ENCODE measurements at regions of chr2 and their contacts with region 1.

Region 1: GRCh38 chr2:42360890-42361727 is at the start of gene COX7A2L:
- DNase-seq: peak; percentile 98
- H3K4me3 Mint-ChIP-seq: peak within 1 kb of the TSS; percentile 83
- H3K27ac Mint-ChIP-seq: peak within 1 kb of the TSS; percentile 98
- H3K4me1 Mint-ChIP-seq: peaks cover 42% of the 10 kb centered on the region
- H3K27me3 Mint-ChIP-seq: no peaks in the 10 kb centered on the region
- total RNA-seq, gene COX7A2L: 150 to 152 TPM

Region 2: DNA sequence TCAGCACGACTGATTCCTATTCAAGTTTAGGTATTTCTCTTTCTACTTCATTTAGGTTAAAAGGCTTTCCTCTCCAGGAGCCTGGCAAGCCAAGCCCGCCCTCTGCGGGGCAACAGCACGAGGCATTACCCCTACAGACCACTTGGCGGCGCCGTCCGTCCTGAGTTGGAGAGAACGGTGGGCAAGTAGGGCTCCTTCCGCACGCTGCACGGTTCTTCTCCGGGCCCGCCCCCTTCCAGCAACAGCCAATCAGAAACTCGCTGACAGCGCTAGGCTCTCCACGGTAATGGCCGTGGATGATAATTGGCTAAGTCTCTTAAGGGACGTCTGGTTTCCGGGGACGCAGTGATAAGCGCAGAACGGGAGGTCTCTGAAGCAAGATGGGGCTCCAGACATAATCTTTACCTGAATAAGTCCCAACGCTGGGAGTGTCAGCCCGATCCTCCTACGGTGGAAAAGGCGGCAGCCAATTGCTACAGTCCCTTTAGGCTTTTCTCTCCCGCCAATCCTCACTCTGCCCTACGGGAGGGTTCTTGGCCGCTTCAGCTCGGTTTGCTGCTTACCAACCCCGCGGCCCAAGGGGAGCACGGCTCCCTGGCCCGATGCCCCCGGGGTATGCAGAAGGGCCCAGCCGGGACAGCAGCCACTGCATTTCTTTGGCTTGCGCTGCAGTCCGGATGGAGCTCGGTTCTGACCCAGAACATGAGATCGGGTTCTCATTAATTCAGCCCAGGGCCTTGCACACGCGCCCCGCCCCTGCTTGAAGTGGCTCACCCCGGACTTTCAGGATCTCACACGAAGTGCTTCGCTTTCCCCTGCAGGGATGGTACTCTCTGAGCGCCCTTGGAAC is 520.2 kb before region 1 on chr2:
- CTCF ChIA-PET with region 1: no interaction called
- intact Hi-C with region 1: loop called (anchors 1 kb)
- DNase-seq: peak; percentile 99
- H3K4me3 Mint-ChIP-seq: peak overlapping the region; percentile 92
- H3K27ac Mint-ChIP-seq: peak overlapping the region; percentile 86
- H3K4me1 Mint-ChIP-seq: peaks cover 5% of the 10 kb centered on the region
- H3K27me3 Mint-ChIP-seq: peaks cover 12% of the 10 kb centered on the region

Region 3: DNA sequence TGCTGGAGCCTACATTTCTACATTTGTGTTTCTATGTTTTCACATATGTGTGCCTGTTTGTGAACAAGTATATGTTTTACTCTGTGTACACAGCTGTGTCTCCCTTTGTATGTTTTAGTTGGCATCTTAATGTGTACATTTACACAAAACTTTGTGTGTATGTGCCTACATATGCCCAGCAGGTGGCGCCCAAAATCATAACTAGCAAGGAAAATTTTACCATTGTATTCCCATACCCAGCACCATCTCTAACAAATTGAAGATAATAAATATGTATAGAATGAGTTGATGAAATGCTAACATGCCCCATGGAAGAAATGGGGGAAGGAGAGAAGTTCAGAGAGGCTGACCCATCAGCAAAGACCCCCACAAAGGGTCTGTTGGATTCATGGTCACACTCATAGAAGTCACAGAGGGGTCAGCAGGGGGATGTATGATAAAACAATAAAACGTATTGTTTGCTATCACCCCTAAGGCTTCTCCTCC is 265.1 kb before region 1 on chr2:
- CTCF ChIA-PET with region 1: interaction called, 8 read pairs
- intact Hi-C with region 1: loop called (anchors 1 kb)
- DNase-seq: peak; percentile 89
- H3K4me3 Mint-ChIP-seq: no peak overlapping the region
- H3K27ac Mint-ChIP-seq: no peak overlapping the region
- H3K4me1 Mint-ChIP-seq: peaks cover 24% of the 10 kb centered on the region
- H3K27me3 Mint-ChIP-seq: no peaks in the 10 kb centered on the region

Region 4: DNA sequence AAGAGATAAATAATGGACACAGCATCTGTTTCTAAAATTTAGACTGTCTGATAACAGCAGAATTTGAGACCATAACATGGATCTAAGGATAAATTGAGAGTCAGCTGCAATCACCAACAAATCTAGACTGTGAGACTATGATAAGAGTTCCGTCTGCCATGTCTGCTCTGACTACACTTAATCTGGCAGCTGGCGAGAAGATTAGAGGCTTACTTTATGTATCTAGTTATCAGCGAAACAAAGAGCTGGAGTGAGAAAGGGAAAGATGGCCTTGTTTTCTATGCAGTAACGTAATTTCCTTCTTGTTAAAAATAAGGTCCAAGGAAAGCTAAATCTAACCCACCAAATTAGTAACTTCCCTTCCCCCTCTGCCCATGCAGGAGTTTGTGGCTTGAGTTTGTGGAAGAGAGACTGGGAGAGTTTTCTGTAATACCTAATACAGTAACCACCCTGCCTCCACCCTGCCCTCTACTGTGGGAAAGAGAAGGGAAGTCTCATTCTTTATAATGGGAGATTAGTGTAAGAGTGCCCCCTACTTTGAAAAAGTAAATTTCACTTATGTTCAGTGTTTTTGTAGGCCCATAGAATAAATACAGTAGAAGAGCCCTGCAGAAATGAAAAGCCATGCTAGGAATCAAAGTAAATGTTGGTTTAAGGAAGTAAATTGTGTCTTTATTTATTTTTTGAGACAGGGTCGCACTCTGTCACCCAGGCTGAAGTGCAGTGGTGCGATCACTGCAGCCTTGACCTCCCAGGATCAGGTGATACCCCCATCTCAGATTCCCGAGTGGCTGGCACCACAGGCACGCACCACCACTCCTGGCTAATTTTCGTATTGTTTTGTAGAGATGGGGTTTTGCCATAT is 164.5 kb before region 1 on chr2:
- CTCF ChIA-PET with region 1: interaction called, 3 read pairs
- intact Hi-C with region 1: loop called (anchors 1 kb)
- DNase-seq: peak; percentile 68
- H3K4me3 Mint-ChIP-seq: no peak overlapping the region
- H3K27ac Mint-ChIP-seq: peak overlapping the region; percentile 44
- H3K4me1 Mint-ChIP-seq: peaks cover 74% of the 10 kb centered on the region
- H3K27me3 Mint-ChIP-seq: no peaks in the 10 kb centered on the region

Region 5: GRCh38 chr2:42494355-42495233 is 133.5 kb after region 1 on chr2:
- CTCF ChIA-PET with region 1: no interaction called
- intact Hi-C with region 1: loop called (anchors 1 kb)
- DNase-seq: peak; percentile 90
- H3K4me3 Mint-ChIP-seq: peak overlapping the region; percentile 94
- H3K27ac Mint-ChIP-seq: no peak overlapping the region
- H3K4me1 Mint-ChIP-seq: peaks cover 6% of the 10 kb centered on the region
- H3K27me3 Mint-ChIP-seq: peaks cover 10% of the 10 kb centered on the region

Region 6: GRCh38 chr2:42722320-42723190 is 361.4 kb after region 1 on chr2:
- CTCF ChIA-PET with region 1: no interaction called
- intact Hi-C with region 1: loop called (anchors 1 kb)
- DNase-seq: peak; percentile 77
- H3K4me3 Mint-ChIP-seq: no peak overlapping the region
- H3K27ac Mint-ChIP-seq: peak overlapping the region; percentile 39
- H3K4me1 Mint-ChIP-seq: peaks cover 10% of the 10 kb centered on the region
- H3K27me3 Mint-ChIP-seq: no peaks in the 10 kb centered on the region